CD8-positive, alpha-beta memory T cell (primary cell): ENCODE measurements at regions of chr3 and their contacts with region 1.

Region 1: GRCh38 chr3:23888617-23889228 is 28.1 kb downstream of the NKIRAS1 start:
- DNase-seq: peak in 2 of 5 donors; percentile 14 to 31
- H3K4me3 ChIP-seq: no peak overlapping the region
- H3K4me3 Mint-ChIP-seq: no peak overlapping the region
- H3K27ac ChIP-seq: no peak overlapping the region
- H3K27ac Mint-ChIP-seq: no peak overlapping the region
- H3K4me1 ChIP-seq: no peaks in the 10 kb centered on the region
- H3K4me1 Mint-ChIP-seq: peaks cover 0 to 2% (median 1%) of the 10 kb centered on the region in 3 donors
- H3K27me3 ChIP-seq: no peaks in the 10 kb centered on the region
- H3K27me3 Mint-ChIP-seq: no peaks in the 10 kb centered on the region

Region 2: GRCh38 chr3:24237971-24238767 is 349.4 kb after region 1 on chr3:
- CTCF ChIA-PET with region 1: interaction called, 12 read pairs
- POLR2A ChIA-PET with region 1: no interaction called
- DNase-seq: peak in 2 of 5 donors; percentile 11 to 17
- H3K4me3 ChIP-seq: no peak overlapping the region
- H3K4me3 Mint-ChIP-seq: no peak overlapping the region
- H3K27ac ChIP-seq: no peak overlapping the region
- H3K27ac Mint-ChIP-seq: no peak overlapping the region
- H3K4me1 ChIP-seq: no peaks in the 10 kb centered on the region
- H3K4me1 Mint-ChIP-seq: no peaks in the 10 kb centered on the region
- H3K27me3 ChIP-seq: peaks cover 3% of the 10 kb centered on the region
- H3K27me3 Mint-ChIP-seq: peaks cover 4 to 13% of the 10 kb centered on the region in 2 donors